Tibial artery (tissue), 4 donors: ENCODE measurements at regions of chr12 and their contacts with region 1.

Region 1: DNA sequence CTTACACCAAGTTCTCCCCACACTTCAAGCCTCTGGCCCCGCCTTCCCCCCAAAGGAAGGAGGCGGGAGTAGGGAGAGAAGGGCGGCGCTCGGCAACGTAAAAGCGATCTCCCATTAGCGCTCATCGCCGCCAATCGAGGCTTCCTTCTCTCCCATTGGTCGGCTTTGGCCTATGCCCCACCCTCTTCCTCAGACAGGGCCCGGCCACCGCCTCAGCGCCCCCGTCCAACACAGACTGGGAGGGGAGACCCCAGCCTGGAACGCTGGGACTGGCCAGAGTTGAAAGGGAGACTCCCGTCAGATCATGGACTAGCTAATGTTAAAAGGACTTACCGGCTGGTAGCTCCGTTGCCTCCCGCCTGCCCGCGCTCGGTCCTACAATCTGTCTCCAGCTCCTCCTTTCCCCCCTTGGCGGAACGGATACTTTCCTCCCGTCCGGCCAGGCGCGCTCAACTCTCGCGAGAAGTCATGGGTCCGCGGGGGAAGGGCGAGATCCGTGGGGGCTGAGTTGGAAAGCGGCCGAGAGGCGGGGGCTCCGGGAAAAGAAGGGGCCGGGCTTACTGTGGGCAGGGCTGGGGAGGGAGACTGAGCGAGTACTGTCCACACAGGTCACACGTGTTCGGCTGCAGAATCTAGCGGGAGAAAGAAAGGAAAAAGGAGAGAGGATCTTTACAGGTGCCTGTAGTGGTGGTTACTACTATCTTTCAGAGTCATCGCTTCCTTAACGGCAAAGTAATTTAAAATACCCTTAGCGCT is at the start of gene ATF7:
- DNase-seq: peak; percentile 98 to 99
- H3K4me3 ChIP-seq: peak within 1 kb of the TSS; percentile 58 to 63
- H3K27ac ChIP-seq: peak within 1 kb of the TSS; percentile 86 to 89
- H3K4me1 ChIP-seq: peaks cover 0 to 47% (median 20%) of the 10 kb centered on the region in 4 donors
- H3K27me3 ChIP-seq: no peaks in the 10 kb centered on the region
- CTCF ChIP-seq: peak in 1 of 2 experiments; percentile 16

Region 2: DNA sequence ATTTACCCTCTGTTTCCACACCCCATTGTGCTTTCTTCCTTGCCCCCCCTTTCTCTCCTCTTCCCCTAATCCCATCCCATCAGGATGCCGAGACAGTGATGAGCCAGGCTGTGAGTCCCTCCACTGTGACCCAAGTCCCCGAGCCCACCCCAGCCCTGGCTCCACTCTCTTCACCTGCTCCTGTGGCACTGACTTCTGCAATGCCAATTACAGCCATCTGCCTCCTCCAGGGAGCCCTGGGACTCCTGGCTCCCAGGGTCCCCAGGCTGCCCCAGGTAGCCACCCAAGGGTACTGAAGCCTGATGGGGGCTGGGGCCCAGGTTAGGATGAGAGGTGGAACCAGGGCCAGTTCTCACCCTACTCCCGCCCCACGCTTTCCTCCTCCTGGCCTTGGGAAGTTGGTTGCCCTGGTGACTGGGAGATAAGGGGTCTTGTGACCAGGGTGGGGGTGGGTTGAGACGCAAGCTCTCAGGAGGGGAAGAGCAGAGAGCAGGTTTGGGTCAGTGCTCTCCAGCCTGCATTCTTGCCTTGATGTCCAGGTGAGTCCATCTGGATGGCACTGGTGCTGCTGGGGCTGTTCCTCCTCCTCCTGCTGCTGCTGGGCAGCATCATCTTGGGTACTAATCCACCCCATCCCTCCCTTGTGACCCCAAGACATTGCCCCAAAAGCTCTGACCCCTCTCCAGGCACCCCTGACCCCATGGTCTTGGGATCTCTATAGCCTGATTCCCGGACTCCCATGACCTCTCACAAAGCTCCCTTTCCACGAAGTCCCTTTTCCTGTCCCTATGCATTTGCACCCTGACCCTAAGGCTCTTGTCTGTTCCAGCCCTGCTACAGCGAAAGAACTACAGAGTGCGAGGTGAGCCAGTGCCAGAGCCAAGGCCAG is 201.3 kb before region 1 on chr12:
- intact Hi-C with region 1: no loop called
- DNase-seq: no peak
- H3K4me3 ChIP-seq: no peak overlapping the region
- H3K27ac ChIP-seq: no peak overlapping the region
- H3K4me1 ChIP-seq: peaks cover 0 to 7% (median 5%) of the 10 kb centered on the region in 4 donors
- H3K27me3 ChIP-seq: no peaks in the 10 kb centered on the region
- CTCF ChIP-seq: no peak

Region 3: GRCh38 chr12:53585448-53586125 is 40.5 kb before region 1 on chr12:
- intact Hi-C with region 1: no loop called
- DNase-seq: no peak
- H3K4me3 ChIP-seq: no peak overlapping the region
- H3K27ac ChIP-seq: no peak overlapping the region
- H3K4me1 ChIP-seq: peaks cover 0 to 23% (median 6%) of the 10 kb centered on the region in 4 donors
- H3K27me3 ChIP-seq: no peaks in the 10 kb centered on the region
- CTCF ChIP-seq: no peak

Region 4: DNA sequence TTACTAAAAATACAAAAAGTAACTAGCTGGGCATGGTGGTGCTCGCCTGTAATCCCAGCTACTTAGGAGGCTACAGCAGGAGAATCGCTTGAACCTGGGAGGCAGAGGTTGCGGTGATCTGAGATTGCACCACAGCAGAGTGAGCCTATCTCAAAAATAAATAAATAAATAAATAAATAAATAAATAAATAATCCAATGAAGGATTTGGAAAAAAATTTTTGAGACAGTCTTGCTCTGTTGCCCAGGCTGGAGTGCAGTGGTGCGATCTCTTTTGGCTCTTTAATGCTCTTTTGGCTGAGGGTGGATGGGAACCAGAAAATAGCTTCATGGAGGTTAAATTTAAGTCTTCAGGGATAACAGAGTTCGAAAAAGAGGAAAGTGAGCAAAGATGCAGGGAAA is 38.1 kb after region 1 on chr12:
- intact Hi-C with region 1: no loop called
- DNase-seq: no peak
- H3K4me3 ChIP-seq: no peak overlapping the region
- H3K27ac ChIP-seq: no peak overlapping the region
- H3K4me1 ChIP-seq: peaks cover 0 to 25% (median 20%) of the 10 kb centered on the region in 4 donors
- H3K27me3 ChIP-seq: no peaks in the 10 kb centered on the region
- CTCF ChIP-seq: no peak

Region 5: DNA sequence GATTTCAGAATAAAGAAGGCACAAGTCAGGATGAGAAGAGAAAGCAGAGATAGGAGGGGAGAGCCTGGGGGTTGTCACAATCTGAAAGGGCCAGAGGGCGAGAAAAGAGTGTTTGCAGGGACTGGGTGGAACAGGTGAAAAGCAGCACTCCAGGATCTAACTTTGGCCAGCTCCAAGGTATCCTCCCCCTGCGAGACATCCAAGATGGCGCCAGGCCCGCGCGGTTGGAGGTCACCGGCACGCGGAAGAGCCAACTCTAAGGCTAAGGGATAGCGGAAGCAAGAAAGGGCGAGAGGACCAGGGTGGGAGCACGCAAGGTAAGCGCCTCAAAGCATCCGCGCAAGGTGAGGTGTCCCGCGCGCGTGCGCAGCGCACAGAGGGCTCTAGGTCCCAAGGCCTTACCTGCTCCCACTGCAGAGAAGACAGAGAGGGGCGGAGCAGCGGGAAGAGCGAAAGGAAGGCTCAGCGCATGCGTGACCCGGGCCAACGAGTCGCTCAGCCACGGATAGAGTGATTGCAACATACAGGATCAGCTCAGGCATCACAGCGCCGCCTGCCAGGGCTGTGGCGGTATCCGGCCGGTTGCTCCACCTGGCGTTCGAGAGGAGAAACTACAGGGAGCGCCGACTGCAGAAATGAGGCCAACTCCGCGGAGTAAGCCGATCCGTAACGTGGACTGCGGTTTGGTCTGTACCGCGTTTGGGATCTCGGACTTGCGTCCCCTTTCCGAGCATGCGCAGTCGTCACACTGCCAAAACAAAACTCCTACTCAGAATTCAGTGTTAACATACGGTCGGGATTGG is 49.7 kb after region 1 on chr12 and contains the start of gene ATP5MC2:
- intact Hi-C with region 1: loop called (anchors 10 kb)
- DNase-seq: peak; percentile 97 to 99
- H3K4me3 ChIP-seq: peak within 1 kb of the TSS; percentile 59 to 71
- H3K27ac ChIP-seq: peak within 1 kb of the TSS; percentile 90 to 99
- H3K4me1 ChIP-seq: peaks cover 0 to 43% (median 28%) of the 10 kb centered on the region in 4 donors
- H3K27me3 ChIP-seq: no peaks in the 10 kb centered on the region
- CTCF ChIP-seq: peak; percentile 97 to 100